CD14-positive monocyte (primary cell): ENCODE measurements at regions of chr5 and their contacts with region 1.

Region 1: DNA sequence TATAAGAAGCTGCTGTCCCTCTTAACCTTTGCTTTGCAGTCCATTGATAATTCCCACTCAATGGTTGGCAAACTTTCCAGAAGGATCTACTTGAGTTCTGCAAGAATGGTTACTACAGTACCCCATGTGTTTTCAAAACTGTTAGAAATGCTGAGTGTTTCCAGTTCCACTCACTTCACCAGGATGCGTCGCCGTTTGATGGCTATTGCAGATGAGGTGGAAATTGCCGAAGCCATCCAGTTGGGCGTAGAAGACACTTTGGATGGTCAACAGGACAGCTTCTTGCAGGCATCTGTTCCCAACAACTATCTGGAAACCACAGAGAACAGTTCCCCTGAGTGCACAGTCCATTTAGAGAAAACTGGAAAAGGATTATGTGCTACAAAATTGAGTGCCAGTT is 27.8 kb upstream of the SETD9 start:
- DNase-seq: no peak
- H3K4me3 ChIP-seq: no peak overlapping the region
- H3K4me3 Mint-ChIP-seq: no peak overlapping the region
- H3K27ac ChIP-seq: peak overlapping the region in 1 of 2 donors; percentile 50
- H3K27ac Mint-ChIP-seq: peak overlapping the region in 1 of 7 donors; percentile 18
- H3K4me1 ChIP-seq: no peaks in the 10 kb centered on the region
- H3K4me1 Mint-ChIP-seq: no peaks in the 10 kb centered on the region
- H3K27me3 ChIP-seq: no peaks in the 10 kb centered on the region
- H3K27me3 Mint-ChIP-seq: no peaks in the 10 kb centered on the region
- CTCF ChIP-seq: no peak

Region 2: DNA sequence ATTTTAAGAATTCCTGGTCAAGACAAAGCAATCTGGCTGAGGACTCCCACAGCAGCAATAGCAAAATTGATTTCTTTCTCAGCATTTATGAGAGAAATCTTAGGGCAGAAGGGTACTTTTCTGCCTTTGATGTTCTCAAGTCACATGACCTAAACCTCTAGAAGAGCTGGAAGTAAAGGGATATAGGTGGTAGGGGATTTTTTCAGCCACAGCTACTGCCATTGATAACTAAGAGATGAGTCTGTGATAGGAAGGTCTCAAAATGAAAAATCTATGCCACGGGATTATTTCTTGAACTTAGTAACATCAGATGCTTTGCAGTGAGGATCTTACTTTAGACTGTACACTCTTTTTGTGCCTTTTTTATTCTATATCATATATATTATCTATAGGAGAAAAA is 922.4 kb before region 1 on chr5:
- intact Hi-C with region 1: loop called (anchors 10 kb)
- DNase-seq: no peak
- H3K4me3 ChIP-seq: no peak overlapping the region
- H3K4me3 Mint-ChIP-seq: no peak overlapping the region
- H3K27ac ChIP-seq: no peak overlapping the region
- H3K27ac Mint-ChIP-seq: no peak overlapping the region
- H3K4me1 ChIP-seq: no peaks in the 10 kb centered on the region
- H3K4me1 Mint-ChIP-seq: no peaks in the 10 kb centered on the region
- H3K27me3 ChIP-seq: no peaks in the 10 kb centered on the region
- H3K27me3 Mint-ChIP-seq: peaks cover 0 to 1% (median 0%) of the 10 kb centered on the region in 3 donors
- CTCF ChIP-seq: no peak

Region 3: DNA sequence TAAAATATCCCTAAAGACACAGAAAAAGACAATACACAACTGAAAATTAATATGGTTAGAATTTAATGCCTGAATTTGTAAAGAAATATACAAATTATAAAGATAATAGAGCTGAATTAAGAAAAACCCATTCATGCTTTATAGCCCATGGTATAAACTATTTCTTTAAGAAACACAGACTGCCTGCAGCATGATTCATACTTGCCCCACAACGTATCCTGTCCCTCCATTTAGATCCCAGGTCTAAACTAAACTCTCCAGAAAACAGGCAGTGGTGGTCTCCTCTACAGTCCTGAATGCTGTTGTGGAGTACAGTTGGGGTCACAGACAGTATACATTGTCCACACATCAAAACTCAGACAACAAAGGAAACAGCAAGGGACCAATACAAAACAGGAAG is 911.6 kb before region 1 on chr5:
- intact Hi-C with region 1: loop called in 1 of 2 experiments (anchors 10 kb)
- DNase-seq: no peak
- H3K4me3 ChIP-seq: no peak overlapping the region
- H3K4me3 Mint-ChIP-seq: no peak overlapping the region
- H3K27ac ChIP-seq: peak overlapping the region in 1 of 2 donors; percentile 27
- H3K27ac Mint-ChIP-seq: peak overlapping the region in 3 of 7 donors; percentile 17 to 58 (median 17)
- H3K4me1 ChIP-seq: no peaks in the 10 kb centered on the region
- H3K4me1 Mint-ChIP-seq: no peaks in the 10 kb centered on the region
- H3K27me3 ChIP-seq: no peaks in the 10 kb centered on the region
- H3K27me3 Mint-ChIP-seq: no peaks in the 10 kb centered on the region
- CTCF ChIP-seq: no peak

Region 4: DNA sequence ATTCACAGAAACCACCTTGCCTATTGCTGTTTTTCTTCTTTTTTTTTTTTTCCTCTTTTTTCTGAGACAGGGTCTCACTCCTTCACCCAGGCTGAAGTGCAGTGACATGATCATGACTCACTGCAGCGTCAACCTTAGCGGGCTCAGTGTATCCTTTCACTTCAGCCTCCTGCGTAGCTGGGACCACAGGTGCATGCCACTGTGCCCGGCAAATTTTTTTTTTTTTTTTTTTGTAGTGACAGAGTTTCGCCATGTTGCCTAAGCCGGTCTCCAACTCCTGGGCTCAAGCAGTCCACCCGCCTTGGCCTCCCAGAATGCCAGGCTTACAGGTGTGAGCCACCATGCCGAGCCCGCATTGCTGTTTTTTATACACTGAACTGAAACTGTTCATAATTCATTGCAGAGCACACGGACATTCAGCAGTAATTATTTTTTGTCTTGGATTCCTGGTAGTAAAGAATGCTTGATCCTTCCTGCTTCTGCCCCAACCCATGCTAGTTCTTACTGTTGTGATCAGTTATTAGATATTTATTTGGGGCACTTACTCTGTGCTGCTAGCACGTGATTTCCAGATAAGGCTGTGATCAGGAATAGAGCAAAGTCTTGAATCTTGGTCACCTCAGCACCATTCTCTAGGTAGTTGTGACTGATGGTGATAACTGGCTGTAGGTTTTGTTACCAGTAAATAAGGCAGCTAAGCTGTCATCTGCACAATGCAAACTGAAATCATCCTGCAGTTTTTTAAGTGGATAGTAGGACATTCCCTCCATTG is 52.2 kb before region 1 on chr5:
- intact Hi-C with region 1: no loop called
- DNase-seq: peak in 2 of 3 donors; percentile 15 to 67
- H3K4me3 ChIP-seq: no peak overlapping the region
- H3K4me3 Mint-ChIP-seq: peak overlapping the region in 1 of 2 donors; percentile 56
- H3K27ac ChIP-seq: peak overlapping the region; percentile 16 to 71
- H3K27ac Mint-ChIP-seq: peak overlapping the region in 5 of 7 donors; percentile 16 to 82 (median 61)
- H3K4me1 ChIP-seq: peaks cover 56 to 85% of the 10 kb centered on the region in 2 donors
- H3K4me1 Mint-ChIP-seq: peaks cover 86% of the 10 kb centered on the region
- H3K27me3 ChIP-seq: no peaks in the 10 kb centered on the region
- H3K27me3 Mint-ChIP-seq: peaks cover 0 to 4% (median 0%) of the 10 kb centered on the region in 3 donors
- CTCF ChIP-seq: no peak

Region 5: DNA sequence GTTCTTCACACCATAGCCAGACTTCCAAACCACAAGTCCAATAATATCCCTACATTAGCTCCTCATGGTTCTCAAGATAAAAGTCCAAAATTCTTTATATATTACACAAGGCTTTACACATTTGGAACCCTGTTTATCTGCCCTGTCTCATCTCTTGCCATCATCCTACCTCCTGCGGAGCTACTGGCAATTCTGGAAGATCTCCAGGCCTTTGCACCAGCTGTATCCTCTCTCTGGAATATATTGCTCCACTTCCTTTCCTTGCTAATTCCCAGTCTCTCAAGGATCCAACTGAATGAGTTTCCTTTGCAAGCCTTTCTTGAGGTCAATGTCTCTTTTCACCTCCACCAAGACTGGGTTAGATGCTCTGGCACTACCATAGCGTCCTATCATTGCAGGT is 111.7 kb after region 1 on chr5:
- intact Hi-C with region 1: no loop called
- DNase-seq: no peak
- H3K4me3 ChIP-seq: no peak overlapping the region
- H3K4me3 Mint-ChIP-seq: no peak overlapping the region
- H3K27ac ChIP-seq: no peak overlapping the region
- H3K27ac Mint-ChIP-seq: no peak overlapping the region
- H3K4me1 ChIP-seq: no peaks in the 10 kb centered on the region
- H3K4me1 Mint-ChIP-seq: no peaks in the 10 kb centered on the region
- H3K27me3 ChIP-seq: no peaks in the 10 kb centered on the region
- H3K27me3 Mint-ChIP-seq: no peaks in the 10 kb centered on the region
- CTCF ChIP-seq: no peak